B cell (primary cell): ENCODE measurements at regions of chr1 and their contacts with region 1.

Region 1: DNA sequence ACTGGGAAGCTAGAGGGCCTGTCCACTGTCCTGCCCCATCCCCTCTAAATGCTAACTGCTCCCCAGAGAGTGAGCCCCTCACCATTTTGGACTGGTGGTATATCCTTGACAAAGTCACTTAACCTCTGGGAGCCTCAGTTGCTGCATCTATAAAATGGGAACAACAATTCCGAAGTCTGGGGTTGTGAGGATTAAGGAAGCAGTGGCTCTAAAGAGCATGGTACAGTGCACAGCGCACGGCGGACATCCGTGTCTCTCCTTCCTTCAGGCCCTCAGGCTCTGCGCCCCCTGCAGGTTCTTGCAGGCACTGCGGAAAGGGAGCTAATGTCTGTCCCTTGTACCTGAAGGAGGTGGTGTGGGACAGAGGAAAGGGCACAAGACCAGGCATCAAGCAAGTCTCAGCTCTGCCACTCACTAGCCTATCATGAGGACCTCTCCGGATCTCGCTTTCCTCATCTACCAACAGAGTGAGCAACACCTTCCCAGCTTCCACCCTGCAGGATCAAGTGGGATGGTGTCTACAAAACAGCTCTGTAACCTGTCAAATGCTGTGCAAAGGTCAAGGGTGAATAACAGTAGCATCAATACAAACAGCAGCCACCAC is 20.1 kb downstream of the ECE1 start:
- DNase-seq: peak; percentile 85
- ATAC-seq: peak; percentile 92
- H3K4me3 ChIP-seq: no peak overlapping the region
- H3K4me3 Mint-ChIP-seq: no peak overlapping the region
- H3K27ac ChIP-seq: no peak overlapping the region
- H3K27ac Mint-ChIP-seq: peak overlapping the region; percentile 51
- H3K4me1 ChIP-seq: peaks cover 0 to 7% of the 10 kb centered on the region in 2 donors
- H3K4me1 Mint-ChIP-seq: peaks cover 10% of the 10 kb centered on the region
- H3K27me3 ChIP-seq: no peaks in the 10 kb centered on the region
- H3K27me3 Mint-ChIP-seq: no peaks in the 10 kb centered on the region
- CTCF ChIP-seq: peak; percentile 97

Region 2: DNA sequence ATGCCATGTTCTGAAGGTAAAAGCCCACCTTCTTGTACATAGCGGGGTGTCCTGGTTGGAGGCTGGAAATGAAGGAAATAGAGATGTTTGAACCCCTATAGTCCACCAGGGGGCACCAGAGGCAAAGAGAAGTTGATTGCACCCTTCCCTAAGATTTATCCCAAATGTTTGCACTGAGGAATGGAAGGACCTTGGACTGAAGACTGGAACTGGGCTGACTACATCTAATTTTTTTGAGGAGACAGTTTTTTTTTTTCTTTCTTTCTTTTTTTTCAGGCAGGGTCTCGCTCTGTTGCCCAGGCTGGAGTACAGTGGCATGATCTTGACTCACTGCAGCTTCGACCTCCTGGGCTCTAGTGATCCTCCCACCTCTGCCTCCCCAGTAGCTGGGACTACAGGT is 38.1 kb before region 1 on chr1:
- CTCF ChIA-PET with region 1: interaction called, 25 read pairs
- POLR2A ChIA-PET with region 1: no interaction called
- intact Hi-C with region 1: no loop called
- DNase-seq: peak; percentile 66
- ATAC-seq: peak; percentile 66
- H3K4me3 ChIP-seq: no peak overlapping the region
- H3K4me3 Mint-ChIP-seq: no peak overlapping the region
- H3K27ac ChIP-seq: no peak overlapping the region
- H3K27ac Mint-ChIP-seq: no peak overlapping the region
- H3K4me1 ChIP-seq: no peaks in the 10 kb centered on the region
- H3K4me1 Mint-ChIP-seq: no peaks in the 10 kb centered on the region
- H3K27me3 ChIP-seq: no peaks in the 10 kb centered on the region
- H3K27me3 Mint-ChIP-seq: no peaks in the 10 kb centered on the region
- CTCF ChIP-seq: peak; percentile 97

Region 3: DNA sequence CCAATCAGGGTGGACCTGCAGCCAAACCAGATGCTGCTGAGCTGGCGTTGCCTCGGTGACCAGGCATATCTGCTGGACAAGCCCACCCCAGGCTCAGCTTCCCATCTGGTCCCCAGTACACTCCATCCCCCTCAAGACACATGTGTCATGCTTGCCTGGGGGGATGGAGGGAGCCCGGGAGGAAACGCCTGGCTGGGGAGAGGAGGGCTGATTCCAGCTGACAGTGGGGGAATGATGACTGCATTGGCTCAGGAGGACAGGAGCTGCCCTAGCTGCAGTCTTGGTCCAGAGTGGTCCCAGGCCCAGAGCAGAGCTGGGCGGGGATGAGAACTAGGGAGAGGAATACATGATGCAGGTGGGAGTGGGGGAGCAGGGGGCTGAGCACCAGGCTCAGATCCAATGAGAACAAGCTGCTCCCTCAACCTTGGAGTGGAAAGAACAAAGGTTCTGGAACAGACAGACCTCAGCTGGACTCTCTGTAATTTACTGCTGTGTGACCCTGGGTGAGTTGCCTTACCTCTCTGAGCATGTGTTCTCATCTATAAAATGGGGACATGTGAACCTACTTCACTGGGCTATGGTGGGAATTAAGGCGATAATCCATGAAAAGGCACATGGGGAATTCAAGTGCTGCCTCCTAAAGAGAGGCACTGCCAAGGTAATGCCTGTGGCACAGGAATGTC is 43.2 kb after region 1 on chr1:
- CTCF ChIA-PET with region 1: interaction called, 13 read pairs
- POLR2A ChIA-PET with region 1: no interaction called
- intact Hi-C with region 1: no loop called
- DNase-seq: no peak
- ATAC-seq: no peak
- H3K4me3 ChIP-seq: no peak overlapping the region
- H3K4me3 Mint-ChIP-seq: no peak overlapping the region
- H3K27ac ChIP-seq: no peak overlapping the region
- H3K27ac Mint-ChIP-seq: no peak overlapping the region
- H3K4me1 ChIP-seq: peaks cover 7 to 8% of the 10 kb centered on the region in 2 donors
- H3K4me1 Mint-ChIP-seq: peaks cover 37% of the 10 kb centered on the region
- H3K27me3 ChIP-seq: no peaks in the 10 kb centered on the region
- H3K27me3 Mint-ChIP-seq: no peaks in the 10 kb centered on the region
- CTCF ChIP-seq: no peak

Region 4: GRCh38 chr1:21324368-21325141 is 54.4 kb after region 1 on chr1:
- CTCF ChIA-PET with region 1: interaction called, 23 read pairs
- POLR2A ChIA-PET with region 1: no interaction called
- intact Hi-C with region 1: no loop called
- DNase-seq: peak; percentile 65
- ATAC-seq: peak; percentile 67
- H3K4me3 ChIP-seq: peak overlapping the region in 4 of 5 experiments; percentile 4 to 16 (median 14)
- H3K4me3 Mint-ChIP-seq: peak overlapping the region; percentile 81
- H3K27ac ChIP-seq: peak overlapping the region; percentile 63 to 64
- H3K27ac Mint-ChIP-seq: peak overlapping the region; percentile 93
- H3K4me1 ChIP-seq: peaks cover 50 to 56% of the 10 kb centered on the region in 2 donors
- H3K4me1 Mint-ChIP-seq: peaks cover 71% of the 10 kb centered on the region
- H3K27me3 ChIP-seq: no peaks in the 10 kb centered on the region
- H3K27me3 Mint-ChIP-seq: no peaks in the 10 kb centered on the region
- CTCF ChIP-seq: no peak

Region 5: GRCh38 chr1:21334214-21335087 is 64.3 kb after region 1 on chr1:
- CTCF ChIA-PET with region 1: interaction called, 55 read pairs
- POLR2A ChIA-PET with region 1: interaction called, 6 read pairs
- intact Hi-C with region 1: loop called (anchors 1 kb)
- DNase-seq: peak; percentile 93
- ATAC-seq: peak; percentile 86
- H3K4me3 ChIP-seq: peak overlapping the region in 4 of 5 experiments; percentile 49 to 69 (median 56)
- H3K4me3 Mint-ChIP-seq: peak overlapping the region; percentile 87
- H3K27ac ChIP-seq: peak overlapping the region; percentile 90 to 95
- H3K27ac Mint-ChIP-seq: peak overlapping the region; percentile 98
- H3K4me1 ChIP-seq: peaks cover 54 to 73% of the 10 kb centered on the region in 2 donors
- H3K4me1 Mint-ChIP-seq: peaks cover 83% of the 10 kb centered on the region
- H3K27me3 ChIP-seq: no peaks in the 10 kb centered on the region
- H3K27me3 Mint-ChIP-seq: no peaks in the 10 kb centered on the region
- CTCF ChIP-seq: peak; percentile 72

Region 6: GRCh38 chr1:21344750-21345443 is 74.7 kb after region 1 on chr1:
- CTCF ChIA-PET with region 1: interaction called, 24 read pairs
- POLR2A ChIA-PET with region 1: interaction called, 3 read pairs
- intact Hi-C with region 1: no loop called
- DNase-seq: no peak
- ATAC-seq: peak; percentile 39
- H3K4me3 ChIP-seq: peak overlapping the region; percentile 60 to 84 (median 69)
- H3K4me3 Mint-ChIP-seq: peak overlapping the region; percentile 91
- H3K27ac ChIP-seq: peak overlapping the region; percentile 35 to 43
- H3K27ac Mint-ChIP-seq: peak overlapping the region; percentile 85
- H3K4me1 ChIP-seq: peaks cover 38 to 45% of the 10 kb centered on the region in 2 donors
- H3K4me1 Mint-ChIP-seq: peaks cover 39% of the 10 kb centered on the region
- H3K27me3 ChIP-seq: peaks cover 0 to 4% (median 0%) of the 10 kb centered on the region in 4 experiments
- H3K27me3 Mint-ChIP-seq: no peaks in the 10 kb centered on the region
- CTCF ChIP-seq: no peak

Region 7: GRCh38 chr1:21355956-21356355 is 85.8 kb after region 1 on chr1:
- CTCF ChIA-PET with region 1: interaction called, 11 read pairs
- POLR2A ChIA-PET with region 1: interaction called, 3 read pairs
- intact Hi-C with region 1: no loop called
- DNase-seq: no peak
- ATAC-seq: no peak
- H3K4me3 ChIP-seq: no peak overlapping the region
- H3K4me3 Mint-ChIP-seq: no peak overlapping the region
- H3K27ac ChIP-seq: no peak overlapping the region
- H3K27ac Mint-ChIP-seq: no peak overlapping the region
- H3K4me1 ChIP-seq: no peaks in the 10 kb centered on the region
- H3K4me1 Mint-ChIP-seq: no peaks in the 10 kb centered on the region
- H3K27me3 ChIP-seq: no peaks in the 10 kb centered on the region
- H3K27me3 Mint-ChIP-seq: no peaks in the 10 kb centered on the region
- CTCF ChIP-seq: no peak